Activated B cell treated with CpG ODN at 0.5 μM for 24 hours (primary cell): ENCODE measurements at regions of chr4 and their contacts with region 1.

Region 1: GRCh38 chr4:174214101-174214878 is 69.2 kb downstream of the FBXO8 start:
- DNase-seq: no peak
- ATAC-seq: no peak
- H3K4me3 Mint-ChIP-seq: peak overlapping the region; percentile 39
- H3K27ac Mint-ChIP-seq: no peak overlapping the region
- H3K4me1 Mint-ChIP-seq: peaks cover 51% of the 10 kb centered on the region
- H3K27me3 Mint-ChIP-seq: peaks cover 79% of the 10 kb centered on the region
- CTCF ChIP-seq: no peak

Region 2: GRCh38 chr4:173529477-173530325 is 684.6 kb before region 1 on chr4 and contains the start of gene HAND2:
- CTCF ChIA-PET with region 1: no interaction called
- POLR2A ChIA-PET with region 1: no interaction called
- intact Hi-C with region 1: loop called (anchors 5 kb)
- DNase-seq: no peak
- ATAC-seq: no peak
- H3K4me3 Mint-ChIP-seq: no peak within 1 kb of the TSS
- H3K27ac Mint-ChIP-seq: peak within 1 kb of the TSS; percentile 57
- H3K4me1 Mint-ChIP-seq: peaks cover 9% of the 10 kb centered on the region
- H3K27me3 Mint-ChIP-seq: peaks cover 76% of the 10 kb centered on the region
- CTCF ChIP-seq: no peak
- total RNA-seq, gene HAND2: not detected in 2 replicates

Region 3: DNA sequence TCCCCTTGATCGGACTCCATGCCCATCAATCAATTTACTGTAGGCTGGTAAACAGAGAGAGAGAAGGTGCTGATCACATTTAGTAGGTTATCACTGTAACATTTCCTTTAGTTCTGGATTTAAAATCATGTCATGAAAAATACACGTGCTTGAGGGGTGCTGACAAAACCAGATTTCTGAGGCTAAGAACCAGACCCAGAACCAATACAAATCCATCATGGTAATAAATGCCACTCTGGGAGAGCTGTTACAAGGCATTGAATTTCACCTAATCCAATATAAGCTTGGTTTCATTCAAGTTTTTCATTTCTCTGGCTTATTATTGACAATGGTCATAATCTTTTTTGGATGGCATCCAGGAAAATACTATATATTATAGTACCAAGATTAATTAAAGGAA is 14.7 kb after region 1 on chr4:
- CTCF ChIA-PET with region 1: no interaction called
- POLR2A ChIA-PET with region 1: no interaction called
- intact Hi-C with region 1: no loop called
- DNase-seq: no peak
- ATAC-seq: no peak
- H3K4me3 Mint-ChIP-seq: no peak overlapping the region
- H3K27ac Mint-ChIP-seq: no peak overlapping the region
- H3K4me1 Mint-ChIP-seq: no peaks in the 10 kb centered on the region
- H3K27me3 Mint-ChIP-seq: peaks cover 18% of the 10 kb centered on the region
- CTCF ChIP-seq: no peak